B cell (primary cell): ENCODE measurements at regions of chr6 and their contacts with region 1.

Region 1: GRCh38 chr6:158644231-158645063 is at the start of gene DYNLT1:
- DNase-seq: peak; percentile 91
- ATAC-seq: peak; percentile 85
- H3K4me3 ChIP-seq: peak within 1 kb of the TSS; percentile 86 to 99 (median 97)
- H3K4me3 Mint-ChIP-seq: peak within 1 kb of the TSS; percentile 98
- H3K27ac ChIP-seq: peak within 1 kb of the TSS; percentile 90 to 91
- H3K27ac Mint-ChIP-seq: peak within 1 kb of the TSS; percentile 97
- H3K4me1 ChIP-seq: peaks cover 14 to 31% of the 10 kb centered on the region in 2 donors
- H3K4me1 Mint-ChIP-seq: peaks cover 51% of the 10 kb centered on the region
- H3K27me3 ChIP-seq: no peaks in the 10 kb centered on the region
- H3K27me3 Mint-ChIP-seq: no peaks in the 10 kb centered on the region
- CTCF ChIP-seq: no peak
- total RNA-seq, gene DYNLT1: 34.8 and 38.5 TPM in 2 replicates

Region 2: GRCh38 chr6:157823001-157823527 is 821.4 kb before region 1 on chr6 and contains the start of gene SNX9:
- CTCF ChIA-PET with region 1: no interaction called
- POLR2A ChIA-PET with region 1: no interaction called
- intact Hi-C with region 1: loop called (anchors 10 kb)
- DNase-seq: peak; percentile 85
- ATAC-seq: peak; percentile 67
- H3K4me3 ChIP-seq: peak within 1 kb of the TSS; percentile 62 to 91 (median 86)
- H3K4me3 Mint-ChIP-seq: peak within 1 kb of the TSS; percentile 94
- H3K27ac ChIP-seq: peak within 1 kb of the TSS; percentile 74 to 95
- H3K27ac Mint-ChIP-seq: peak within 1 kb of the TSS; percentile 97
- H3K4me1 ChIP-seq: peaks cover 16 to 17% of the 10 kb centered on the region in 2 donors
- H3K4me1 Mint-ChIP-seq: peaks cover 43% of the 10 kb centered on the region
- H3K27me3 ChIP-seq: no peaks in the 10 kb centered on the region
- H3K27me3 Mint-ChIP-seq: no peaks in the 10 kb centered on the region
- CTCF ChIP-seq: no peak
- total RNA-seq, gene SNX9: 50.7 and 53.0 TPM in 2 replicates

Region 3: DNA sequence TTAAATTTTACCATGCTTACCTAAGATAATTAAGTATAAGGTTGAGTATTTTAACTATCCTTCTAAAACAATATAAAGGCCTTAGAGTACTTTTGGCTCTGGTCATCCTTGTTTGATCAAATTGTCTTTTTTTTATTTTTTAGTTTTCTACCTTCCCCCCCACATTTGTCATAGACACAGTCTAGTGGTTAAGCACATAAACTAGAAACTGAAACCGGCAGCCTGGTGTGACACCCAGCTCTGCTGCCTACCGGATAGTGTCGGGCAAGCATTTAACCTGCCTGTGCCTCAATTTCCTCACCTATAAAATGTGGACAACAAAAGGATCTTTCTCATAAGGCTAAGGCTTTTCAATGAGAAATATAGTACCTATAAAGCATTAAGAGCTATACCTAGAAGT is 353.8 kb before region 1 on chr6:
- CTCF ChIA-PET with region 1: no interaction called
- POLR2A ChIA-PET with region 1: no interaction called
- intact Hi-C with region 1: loop called (anchors 10 kb)
- DNase-seq: peak; percentile 80
- ATAC-seq: peak; percentile 88
- H3K4me3 ChIP-seq: peak overlapping the region; percentile 7 to 74 (median 47)
- H3K4me3 Mint-ChIP-seq: peak overlapping the region; percentile 83
- H3K27ac ChIP-seq: peak overlapping the region; percentile 69 to 88
- H3K27ac Mint-ChIP-seq: peak overlapping the region; percentile 95
- H3K4me1 ChIP-seq: peaks cover 48 to 53% of the 10 kb centered on the region in 2 donors
- H3K4me1 Mint-ChIP-seq: peaks cover 62% of the 10 kb centered on the region
- H3K27me3 ChIP-seq: no peaks in the 10 kb centered on the region
- H3K27me3 Mint-ChIP-seq: no peaks in the 10 kb centered on the region
- CTCF ChIP-seq: no peak

Region 4: DNA sequence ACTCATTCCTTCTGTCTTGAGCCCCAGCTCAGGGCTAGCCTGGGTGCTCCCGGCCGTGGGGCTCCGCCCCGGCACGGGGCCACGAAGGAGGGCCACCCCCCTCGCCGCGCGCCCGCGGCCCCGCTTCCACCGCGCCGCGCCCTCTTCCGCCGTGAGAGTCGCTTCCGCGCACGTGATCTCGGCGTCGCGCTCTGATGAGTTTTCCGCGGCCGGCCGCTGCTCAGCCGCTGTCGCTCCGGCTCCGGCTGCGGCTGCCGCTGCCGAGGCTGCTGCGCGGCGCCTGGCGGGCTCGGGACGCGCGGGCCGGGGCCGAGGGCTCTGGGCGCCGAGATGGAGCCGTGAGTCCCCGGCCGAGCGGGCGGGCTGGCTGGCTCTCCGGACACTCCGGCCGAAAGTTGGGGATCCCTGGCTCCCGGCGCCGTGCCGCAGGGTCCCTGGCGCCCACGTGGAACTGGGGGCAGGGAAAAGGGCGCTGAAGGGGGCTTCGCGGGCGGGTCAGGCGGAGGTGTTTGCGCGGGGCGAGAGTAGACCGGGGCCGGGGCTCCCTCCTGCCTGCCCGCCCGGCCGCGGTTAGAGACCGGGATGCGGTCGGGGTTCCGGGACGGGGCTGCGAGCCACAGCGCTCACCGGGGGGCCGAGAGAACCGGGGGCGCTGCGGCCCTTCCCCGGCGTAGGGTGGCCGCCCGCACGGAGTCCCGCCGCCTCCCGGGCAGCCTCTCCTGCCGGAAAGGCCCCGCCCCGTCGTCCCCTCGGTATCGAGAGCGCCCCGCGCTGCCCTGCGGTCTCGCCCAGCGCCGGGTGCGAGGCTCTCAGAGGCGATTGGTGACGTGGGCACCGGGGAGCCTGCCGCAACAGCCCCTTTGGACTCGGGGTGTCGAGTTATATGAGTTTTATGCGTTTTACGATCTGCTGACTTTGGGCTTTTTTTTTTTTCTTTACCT is 84.3 kb before region 1 on chr6 and contains the start of gene TMEM181:
- CTCF ChIA-PET with region 1: no interaction called
- POLR2A ChIA-PET with region 1: no interaction called
- intact Hi-C with region 1: loop called (anchors 2 kb)
- DNase-seq: peak; percentile 92
- ATAC-seq: peak; percentile 89
- H3K4me3 ChIP-seq: peak within 1 kb of the TSS; percentile 54 to 83 (median 75)
- H3K4me3 Mint-ChIP-seq: peak within 1 kb of the TSS; percentile 84
- H3K27ac ChIP-seq: peak within 1 kb of the TSS; percentile 62 to 76
- H3K27ac Mint-ChIP-seq: peak within 1 kb of the TSS; percentile 82
- H3K4me1 ChIP-seq: peaks cover 15 to 21% of the 10 kb centered on the region in 2 donors
- H3K4me1 Mint-ChIP-seq: peaks cover 28% of the 10 kb centered on the region
- H3K27me3 ChIP-seq: no peaks in the 10 kb centered on the region
- H3K27me3 Mint-ChIP-seq: no peaks in the 10 kb centered on the region
- CTCF ChIP-seq: no peak
- total RNA-seq, gene TMEM181: 9.3 and 9.6 TPM in 2 replicates

Region 5: DNA sequence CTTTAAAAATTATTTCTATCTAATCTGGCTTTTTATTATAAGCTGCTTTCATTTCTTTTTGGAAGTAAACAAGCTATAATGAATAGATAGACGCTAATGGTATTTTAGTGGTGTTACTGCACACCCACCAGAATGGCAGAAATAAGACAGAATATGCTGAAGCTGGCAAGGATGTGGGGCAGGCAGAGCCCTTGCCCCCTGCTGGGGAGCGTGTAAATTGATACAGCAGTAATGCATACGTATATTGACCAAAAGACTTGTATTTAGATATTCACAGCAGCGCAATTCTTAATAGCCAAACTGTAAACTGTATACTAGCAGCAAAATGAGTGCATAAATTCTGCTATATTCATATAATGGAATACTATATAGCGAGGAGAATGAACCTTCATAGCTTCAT is 49.2 kb before region 1 on chr6:
- CTCF ChIA-PET with region 1: no interaction called
- POLR2A ChIA-PET with region 1: no interaction called
- intact Hi-C with region 1: no loop called
- DNase-seq: peak; percentile 24
- ATAC-seq: no peak
- H3K4me3 ChIP-seq: no peak overlapping the region
- H3K4me3 Mint-ChIP-seq: no peak overlapping the region
- H3K27ac ChIP-seq: no peak overlapping the region
- H3K27ac Mint-ChIP-seq: no peak overlapping the region
- H3K4me1 ChIP-seq: peaks cover 0 to 14% of the 10 kb centered on the region in 2 donors
- H3K4me1 Mint-ChIP-seq: peaks cover 14% of the 10 kb centered on the region
- H3K27me3 ChIP-seq: no peaks in the 10 kb centered on the region
- H3K27me3 Mint-ChIP-seq: no peaks in the 10 kb centered on the region
- CTCF ChIP-seq: peak; percentile 22

Region 6: GRCh38 chr6:158660333-158660754 is 15.9 kb after region 1 on chr6:
- CTCF ChIA-PET with region 1: interaction called, 36 read pairs
- POLR2A ChIA-PET with region 1: no interaction called
- intact Hi-C with region 1: loop called (anchors 2 kb)
- DNase-seq: peak; percentile 72
- ATAC-seq: peak; percentile 84
- H3K4me3 ChIP-seq: no peak overlapping the region
- H3K4me3 Mint-ChIP-seq: no peak overlapping the region
- H3K27ac ChIP-seq: no peak overlapping the region
- H3K27ac Mint-ChIP-seq: no peak overlapping the region
- H3K4me1 ChIP-seq: peaks cover 9 to 12% of the 10 kb centered on the region in 2 donors
- H3K4me1 Mint-ChIP-seq: peaks cover 8% of the 10 kb centered on the region
- H3K27me3 ChIP-seq: peaks cover 0 to 10% (median 5%) of the 10 kb centered on the region in 4 experiments
- H3K27me3 Mint-ChIP-seq: peaks cover 13% of the 10 kb centered on the region
- CTCF ChIP-seq: peak; percentile 77

Region 7: DNA sequence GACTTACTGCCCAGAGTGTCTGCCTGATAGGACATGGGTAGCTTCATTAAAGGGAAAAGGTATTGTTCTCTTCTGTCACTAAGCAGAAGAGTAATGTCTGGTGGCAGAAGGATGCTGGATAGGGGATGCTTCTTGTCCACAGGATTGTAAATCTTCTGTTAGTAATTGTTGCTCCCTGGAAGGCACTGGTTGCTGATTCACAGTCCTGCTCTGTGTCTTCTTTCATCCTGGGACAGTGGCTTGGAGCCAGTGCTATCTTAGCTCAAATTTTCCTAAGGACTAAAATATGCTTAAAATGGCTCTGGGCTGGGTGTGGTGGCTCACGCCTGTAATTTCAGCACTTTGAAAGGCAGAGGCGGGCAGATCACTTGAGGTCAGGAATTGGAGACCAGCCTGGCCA is 53.4 kb after region 1 on chr6:
- CTCF ChIA-PET with region 1: no interaction called
- POLR2A ChIA-PET with region 1: no interaction called
- intact Hi-C with region 1: no loop called
- DNase-seq: no peak
- ATAC-seq: no peak
- H3K4me3 ChIP-seq: no peak overlapping the region
- H3K4me3 Mint-ChIP-seq: no peak overlapping the region
- H3K27ac ChIP-seq: no peak overlapping the region
- H3K27ac Mint-ChIP-seq: no peak overlapping the region
- H3K4me1 ChIP-seq: no peaks in the 10 kb centered on the region
- H3K4me1 Mint-ChIP-seq: no peaks in the 10 kb centered on the region
- H3K27me3 ChIP-seq: no peaks in the 10 kb centered on the region
- H3K27me3 Mint-ChIP-seq: no peaks in the 10 kb centered on the region
- CTCF ChIP-seq: no peak